ENCODE measurements at regions of chr4 and their contacts with region 1.

Region 1: GRCh38 chr4:108902769-108903168 is 139.9 kb upstream of the ETNPPL start:
- DNase-seq: no peak
- H3K4me3 ChIP-seq: no peak overlapping the region
- H3K27ac ChIP-seq: no peak overlapping the region
- H3K4me1 ChIP-seq: no peaks in the 10 kb centered on the region
- H3K27me3 ChIP-seq: no peaks in the 10 kb centered on the region
- CTCF ChIP-seq: no peak
- EP300 ChIP-seq: no peak
- POLR2A ChIP-seq: no peak

Region 2: GRCh38 chr4:108941911-108942379 is 39.2 kb after region 1 on chr4:
- in situ Hi-C with region 1: no loop called
- intact Hi-C with region 1: loop called (anchors 2 kb)
- DNase-seq: no peak
- H3K4me3 ChIP-seq: no peak overlapping the region
- H3K27ac ChIP-seq: no peak overlapping the region
- H3K4me1 ChIP-seq: no peaks in the 10 kb centered on the region
- H3K27me3 ChIP-seq: no peaks in the 10 kb centered on the region
- CTCF ChIP-seq: no peak
- EP300 ChIP-seq: no peak
- POLR2A ChIP-seq: no peak

Region 3: DNA sequence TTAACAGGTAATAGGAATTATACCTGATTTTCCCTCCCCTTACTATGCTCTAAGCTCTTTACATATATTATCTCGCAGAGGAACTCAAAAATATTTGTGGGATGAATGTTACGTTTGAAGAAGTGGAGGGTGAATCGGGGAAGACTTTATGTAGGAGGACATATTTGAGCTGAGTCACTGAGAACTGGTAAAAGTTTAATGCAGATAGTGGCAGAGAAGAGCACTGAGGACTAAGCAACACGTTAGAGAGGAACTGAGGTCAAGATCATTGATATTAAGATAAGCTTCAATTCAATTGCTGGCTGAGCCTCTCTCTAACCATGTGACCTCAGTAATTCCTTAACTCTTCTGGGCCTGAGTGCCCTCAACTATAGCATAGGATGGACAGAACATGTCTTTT is 1322.0 kb after region 1 on chr4:
- in situ Hi-C with region 1: no loop called
- intact Hi-C with region 1: loop called (anchors 5 kb)
- DNase-seq: no peak
- H3K4me3 ChIP-seq: no peak overlapping the region
- H3K27ac ChIP-seq: no peak overlapping the region
- H3K4me1 ChIP-seq: no peaks in the 10 kb centered on the region
- H3K27me3 ChIP-seq: no peaks in the 10 kb centered on the region
- CTCF ChIP-seq: no peak
- EP300 ChIP-seq: no peak
- POLR2A ChIP-seq: no peak